ENCODE measurements at regions of chr1 and their contacts with region 1.

Region 1: GRCh38 chr1:157193702-157194391 is 55.7 kb upstream of the ETV3 start:
- DNase-seq: peak in 9 of 10 donors; percentile 31 to 75 (median 62)
- H3K4me3 ChIP-seq: no peak overlapping the region
- H3K27ac ChIP-seq: no peak overlapping the region
- H3K27me3 ChIP-seq: peaks cover 0 to 48% (median 33%) of the 10 kb centered on the region in 45 donors
- CTCF ChIP-seq: peak; percentile 32 to 73 (median 56)

Region 2: DNA sequence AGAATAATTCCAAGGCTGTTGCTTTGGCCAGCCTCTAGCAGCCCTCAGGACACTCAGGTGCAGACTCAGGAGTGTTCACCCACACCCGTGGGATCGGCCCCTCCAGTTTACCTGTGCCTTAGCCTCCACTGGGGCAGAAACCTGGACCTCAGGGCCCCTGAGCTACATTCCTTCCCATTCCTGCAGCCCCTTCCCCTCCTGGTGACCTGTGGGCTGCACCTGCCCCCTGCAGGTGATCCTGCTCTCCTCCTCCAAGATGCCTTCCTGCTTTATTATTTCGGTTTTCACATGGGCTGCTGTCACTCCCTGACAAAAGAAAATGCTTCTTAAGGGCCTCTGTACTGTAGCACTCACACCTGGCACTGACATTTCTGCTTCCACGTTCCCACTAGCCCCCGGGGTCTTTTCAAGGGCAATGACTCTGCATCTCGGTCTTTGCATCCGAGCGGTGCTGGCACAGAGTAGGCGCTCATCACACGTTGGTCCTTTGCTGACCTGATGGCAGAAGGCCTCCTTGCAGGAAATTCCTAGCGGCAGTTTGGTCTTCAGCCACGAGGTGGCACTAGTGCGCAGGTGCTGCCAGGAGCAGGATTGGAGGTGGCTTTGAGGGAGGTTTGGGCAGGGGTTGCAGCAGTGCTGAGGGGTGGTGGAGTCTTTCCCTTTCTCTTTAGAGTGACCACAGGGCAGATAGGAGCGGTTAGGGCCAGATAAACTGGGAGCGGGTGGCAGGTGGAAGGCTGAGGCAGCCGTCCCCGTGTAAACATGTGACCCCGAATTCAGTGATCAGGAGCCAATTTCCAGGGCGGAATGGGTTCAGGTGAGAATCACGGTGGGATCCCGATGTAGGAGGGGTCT is 30.3 kb before region 1 on chr1:
- intact Hi-C with region 1: no loop called
- DNase-seq: peak in 8 of 10 donors; percentile 42 to 71 (median 66)
- H3K4me3 ChIP-seq: peak overlapping the region in 25 of 59 donors; percentile 12 to 50 (median 29)
- H3K27ac ChIP-seq: no peak overlapping the region
- H3K27me3 ChIP-seq: peaks cover 0 to 11% (median 0%) of the 10 kb centered on the region in 45 donors
- CTCF ChIP-seq: peak; percentile 64 to 93 (median 82)

Region 3: GRCh38 chr1:157240495-157241184 is 46.8 kb after region 1 on chr1:
- intact Hi-C with region 1: no loop called
- DNase-seq: no peak
- H3K4me3 ChIP-seq: no peak overlapping the region
- H3K27ac ChIP-seq: no peak overlapping the region
- H3K27me3 ChIP-seq: peaks cover 0 to 18% (median 0%) of the 10 kb centered on the region in 45 donors
- CTCF ChIP-seq: no peak

Region 4: DNA sequence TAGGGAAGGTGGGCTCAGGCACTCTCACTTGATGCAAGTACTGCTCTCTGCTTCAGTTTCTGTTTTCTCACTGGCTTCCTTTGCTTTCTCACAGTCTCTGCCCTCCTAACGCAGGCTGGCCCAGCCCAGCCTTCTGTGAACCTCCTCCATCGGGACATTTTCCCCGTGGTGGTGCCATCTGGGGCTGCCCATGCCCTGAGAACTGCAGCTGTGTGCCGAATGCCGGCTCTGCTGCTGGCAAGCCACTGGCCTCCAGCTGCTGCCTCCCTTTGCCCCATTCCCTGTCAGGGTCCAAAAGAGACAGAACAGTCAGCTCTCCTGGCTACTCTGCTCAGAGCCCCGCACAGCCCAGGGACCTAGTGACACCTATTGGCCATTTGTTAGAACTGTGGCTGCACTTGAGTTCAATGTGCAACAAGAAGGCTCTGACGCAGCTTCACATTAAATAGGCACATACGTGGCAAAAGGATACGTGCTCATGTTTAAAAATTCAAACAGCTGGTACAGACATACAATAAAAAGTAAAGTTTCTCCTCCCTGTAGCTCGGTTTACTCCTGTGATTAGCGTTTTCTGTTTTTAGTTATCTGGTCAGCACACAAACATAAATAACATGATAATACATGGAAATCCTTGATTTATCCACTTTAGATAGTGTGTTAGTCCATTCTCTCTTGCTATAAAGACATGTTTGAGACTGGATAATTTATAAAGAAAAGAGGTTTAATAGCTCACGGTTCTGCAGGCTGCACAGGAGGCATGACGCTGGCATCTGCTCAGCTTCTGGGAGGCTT is 311.8 kb after region 1 on chr1:
- intact Hi-C with region 1: loop called in 1 of 2 experiments (anchors 5 kb)
- DNase-seq: peak in 8 of 10 donors; percentile 15 to 66 (median 61)
- H3K4me3 ChIP-seq: peak overlapping the region in 5 of 59 donors; percentile 13 to 35 (median 32)
- H3K27ac ChIP-seq: no peak overlapping the region
- H3K27me3 ChIP-seq: peaks cover 0 to 4% (median 0%) of the 10 kb centered on the region in 45 donors
- CTCF ChIP-seq: peak in 55 of 56 donors; percentile 45 to 77 (median 67)